ENCODE measurements at regions of chr9 and their contacts with region 1.

Region 1: DNA sequence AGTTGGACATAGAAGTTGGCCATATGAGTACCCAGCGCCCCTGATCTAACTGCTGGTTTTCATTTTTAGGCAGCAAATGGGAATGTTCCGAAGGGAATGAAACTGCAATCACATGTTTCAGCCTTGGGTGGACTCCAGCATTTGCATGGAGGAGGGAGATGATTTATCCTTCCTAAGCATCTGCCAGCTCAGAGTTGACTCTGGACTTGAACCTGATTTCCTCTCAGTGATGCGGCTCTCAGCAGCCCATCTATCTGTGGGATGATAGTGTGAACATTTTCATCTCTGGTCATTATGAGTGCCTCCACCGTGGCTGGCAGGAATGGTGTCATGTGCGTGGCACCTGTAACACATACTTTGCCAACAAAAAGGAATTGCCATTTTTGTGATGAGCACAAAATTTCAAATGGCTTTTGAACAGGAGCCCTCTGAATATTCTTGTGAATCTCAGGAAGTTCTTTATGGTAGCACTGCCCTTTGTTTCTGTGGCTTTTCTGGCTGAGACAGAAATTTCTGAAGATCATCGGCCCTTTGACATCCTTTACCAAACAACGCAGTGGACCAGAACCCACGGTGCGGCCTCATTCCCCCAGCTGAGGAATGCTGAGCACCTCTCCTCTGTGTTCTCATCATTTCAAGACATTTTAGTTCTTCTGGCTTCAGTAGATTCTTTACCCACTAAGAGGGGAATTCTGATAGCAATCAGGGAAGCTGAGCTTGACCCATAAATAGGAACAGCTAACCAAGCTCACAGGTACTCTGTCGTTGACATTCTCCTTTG is 28.5 kb downstream of the FUBP3 start:
- DNase-seq: no peak

Region 2: GRCh38 chr9:130073373-130073772 is 534.5 kb before region 1 on chr9:
- in situ Hi-C with region 1: no loop called
- DNase-seq: no peak

Region 3: GRCh38 chr9:130478736-130479575 is 128.9 kb before region 1 on chr9:
- in situ Hi-C with region 1: loop called (anchors 10 kb)
- DNase-seq: no peak

Region 4: GRCh38 chr9:130693426-130694191 is 85.8 kb after region 1 on chr9 and contains the start of gene EXOSC2:
- in situ Hi-C with region 1: no loop called
- DNase-seq: peak; percentile 99
- total RNA-seq, gene EXOSC2: 41.3 and 46.7 TPM in 2 replicates

Measured in SK-MEL-5 (cell line).